IMR-90 (cell line): ENCODE measurements at regions of chr7 and their contacts with region 1.

Region 1: DNA sequence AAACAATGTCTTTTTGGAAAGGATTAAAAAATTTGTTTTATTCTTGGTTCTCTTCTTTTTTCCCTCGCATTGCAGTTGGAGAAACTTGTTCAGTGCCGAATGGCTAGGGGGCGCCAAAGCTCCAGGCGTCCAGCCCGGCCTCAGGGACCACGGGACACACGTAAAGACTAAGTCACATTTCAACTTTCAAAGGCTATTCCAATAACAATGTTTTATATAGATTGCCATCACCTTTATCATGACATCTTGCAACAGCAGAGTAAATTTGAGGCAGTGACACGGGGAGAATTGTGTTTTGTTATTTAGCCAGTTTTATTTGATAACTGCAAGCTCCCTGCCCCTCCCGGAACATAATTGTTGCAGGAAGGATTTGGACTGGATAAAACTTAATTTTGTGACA is 2.2 kb upstream of the IGFBP3 start:
- DNase-seq: peak; percentile 72
- ATAC-seq: no peak
- H3K4me3 ChIP-seq: no peak overlapping the region; the same call in 1 of the 2 replicates
- H3K27ac ChIP-seq: no peak overlapping the region
- H3K4me1 ChIP-seq: peaks cover 14% of the 10 kb centered on the region
- H3K27me3 ChIP-seq: no peaks in the 10 kb centered on the region
- CTCF ChIP-seq: peak; percentile 97
- POLR2A ChIP-seq: peak; percentile 47; the same call in 1 of the 2 replicates
- RAD21 ChIP-seq: peak; percentile 99

Region 2: GRCh38 chr7:45469103-45469502 is 454.2 kb before region 1 on chr7:
- CTCF ChIA-PET with region 1: no interaction called
- POLR2A ChIA-PET with region 1: no interaction called
- dilution Hi-C with region 1: no loop called
- in situ Hi-C with region 1: no loop called
- intact Hi-C with region 1: no loop called
- DNase-seq: no peak
- ATAC-seq: no peak
- H3K4me3 ChIP-seq: no peak overlapping the region
- H3K27ac ChIP-seq: no peak overlapping the region
- H3K4me1 ChIP-seq: no peaks in the 10 kb centered on the region
- H3K27me3 ChIP-seq: no peaks in the 10 kb centered on the region
- CTCF ChIP-seq: no peak
- POLR2A ChIP-seq: no peak
- RAD21 ChIP-seq: no peak

Region 3: DNA sequence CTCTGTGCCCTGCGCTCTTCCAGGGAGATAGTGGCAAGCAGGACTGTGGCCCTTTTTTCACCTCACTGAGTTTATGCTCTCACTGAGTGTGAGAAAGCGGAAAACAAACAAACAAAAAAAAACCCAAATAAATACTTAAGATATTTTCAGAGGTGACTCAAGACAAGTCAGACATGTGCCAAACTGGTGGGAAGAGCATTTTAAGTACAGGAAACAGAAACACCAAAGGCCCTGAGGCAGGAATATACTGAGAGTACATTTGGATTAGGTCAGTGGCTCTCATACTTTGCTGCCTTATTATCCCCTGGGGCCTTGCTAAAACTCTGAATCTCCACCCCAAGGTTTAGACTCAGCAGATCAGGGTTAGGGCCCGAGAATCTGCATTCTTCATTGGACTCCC is 109.7 kb after region 1 on chr7:
- CTCF ChIA-PET with region 1: no interaction called
- POLR2A ChIA-PET with region 1: no interaction called
- dilution Hi-C with region 1: no loop called
- in situ Hi-C with region 1: no loop called
- intact Hi-C with region 1: loop called (anchors 10 kb)
- DNase-seq: peak; percentile 39
- ATAC-seq: no peak
- H3K4me3 ChIP-seq: no peak overlapping the region
- H3K27ac ChIP-seq: no peak overlapping the region
- H3K4me1 ChIP-seq: peaks cover 12% of the 10 kb centered on the region
- H3K27me3 ChIP-seq: no peaks in the 10 kb centered on the region
- CTCF ChIP-seq: no peak
- POLR2A ChIP-seq: no peak
- RAD21 ChIP-seq: no peak

Region 4: GRCh38 chr7:46109437-46109836 is 186.1 kb after region 1 on chr7:
- CTCF ChIA-PET with region 1: no interaction called
- POLR2A ChIA-PET with region 1: no interaction called
- dilution Hi-C with region 1: no loop called
- in situ Hi-C with region 1: no loop called
- intact Hi-C with region 1: no loop called
- DNase-seq: no peak
- ATAC-seq: no peak
- H3K4me3 ChIP-seq: no peak overlapping the region
- H3K27ac ChIP-seq: no peak overlapping the region
- H3K4me1 ChIP-seq: no peaks in the 10 kb centered on the region
- H3K27me3 ChIP-seq: no peaks in the 10 kb centered on the region
- CTCF ChIP-seq: no peak
- POLR2A ChIP-seq: no peak
- RAD21 ChIP-seq: no peak

Region 5: DNA sequence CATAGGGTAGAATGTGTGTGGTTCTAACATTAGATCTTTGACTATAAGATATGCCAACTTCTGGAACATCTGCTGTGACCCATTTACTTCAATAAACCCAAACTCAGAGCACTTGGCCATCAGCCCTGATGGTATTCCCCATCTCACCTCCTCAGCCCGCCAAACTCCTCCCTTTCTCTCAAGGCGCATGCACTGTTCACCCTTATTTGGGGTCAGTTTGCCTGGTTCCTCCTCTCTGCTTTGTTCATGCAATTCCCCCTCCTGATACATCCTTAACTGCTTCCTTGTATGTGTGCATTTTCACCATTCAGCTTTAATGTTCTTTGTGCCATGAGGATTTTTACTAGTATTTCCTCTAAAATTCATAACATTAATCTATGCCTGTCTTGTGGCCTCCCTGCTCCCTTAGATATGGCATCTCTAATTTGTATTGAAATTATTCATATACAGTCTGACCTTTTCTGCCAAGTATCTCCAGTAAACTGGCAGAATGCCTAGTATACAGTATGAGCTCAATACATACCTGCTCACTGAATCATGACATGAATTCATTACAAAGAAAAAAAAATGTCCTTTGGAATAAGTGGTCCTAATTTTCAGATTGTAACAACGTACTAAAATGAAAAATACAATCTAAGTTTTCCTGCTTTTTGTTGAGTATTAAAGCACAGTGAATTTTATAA is 334.6 kb after region 1 on chr7:
- CTCF ChIA-PET with region 1: no interaction called
- POLR2A ChIA-PET with region 1: no interaction called
- dilution Hi-C with region 1: no loop called
- in situ Hi-C with region 1: no loop called
- intact Hi-C with region 1: loop called (anchors 5 kb)
- DNase-seq: peak; percentile 93
- ATAC-seq: peak; percentile 87
- H3K4me3 ChIP-seq: no peak overlapping the region
- H3K27ac ChIP-seq: peak overlapping the region; percentile 60
- H3K4me1 ChIP-seq: peaks cover 10% of the 10 kb centered on the region
- H3K27me3 ChIP-seq: no peaks in the 10 kb centered on the region
- CTCF ChIP-seq: no peak
- POLR2A ChIP-seq: no peak
- RAD21 ChIP-seq: no peak

Region 6: DNA sequence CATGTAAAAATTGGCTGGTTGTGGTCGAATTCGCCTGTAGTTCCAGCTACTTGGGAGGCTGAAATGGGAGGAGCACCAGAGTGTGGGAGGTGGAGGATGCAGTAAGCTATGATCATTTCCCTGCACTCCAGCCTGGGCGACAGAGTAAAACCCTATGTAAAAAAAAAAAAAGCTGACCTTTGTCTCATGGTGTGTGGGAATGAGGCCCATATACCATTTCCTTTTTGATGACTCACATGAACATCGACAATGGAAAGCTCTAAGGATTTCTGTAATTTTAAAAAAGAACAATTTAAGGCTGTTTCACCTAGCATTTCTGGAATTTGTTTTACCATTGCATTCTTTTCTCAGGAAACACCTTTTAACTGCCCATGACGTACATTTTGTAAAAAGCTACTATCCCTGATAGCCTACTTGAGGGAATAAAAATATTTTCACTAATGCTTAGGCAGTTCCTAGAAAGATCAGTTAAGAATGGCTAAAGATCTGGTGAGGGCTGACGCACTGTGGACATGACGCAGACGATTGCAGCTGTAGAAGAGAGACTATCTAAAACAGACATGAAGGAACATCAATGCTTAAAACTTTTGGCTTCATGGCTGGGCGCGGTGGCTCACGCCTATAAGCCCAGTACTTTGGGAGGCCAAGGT is 398.4 kb after region 1 on chr7:
- CTCF ChIA-PET with region 1: no interaction called
- POLR2A ChIA-PET with region 1: no interaction called
- dilution Hi-C with region 1: no loop called
- in situ Hi-C with region 1: no loop called
- intact Hi-C with region 1: no loop called
- DNase-seq: peak; percentile 68
- ATAC-seq: no peak
- H3K4me3 ChIP-seq: no peak overlapping the region
- H3K27ac ChIP-seq: no peak overlapping the region
- H3K4me1 ChIP-seq: peaks cover 2% of the 10 kb centered on the region; the same call in 1 of the 2 replicates
- H3K27me3 ChIP-seq: no peaks in the 10 kb centered on the region
- CTCF ChIP-seq: no peak
- POLR2A ChIP-seq: no peak
- RAD21 ChIP-seq: no peak

Region 7: DNA sequence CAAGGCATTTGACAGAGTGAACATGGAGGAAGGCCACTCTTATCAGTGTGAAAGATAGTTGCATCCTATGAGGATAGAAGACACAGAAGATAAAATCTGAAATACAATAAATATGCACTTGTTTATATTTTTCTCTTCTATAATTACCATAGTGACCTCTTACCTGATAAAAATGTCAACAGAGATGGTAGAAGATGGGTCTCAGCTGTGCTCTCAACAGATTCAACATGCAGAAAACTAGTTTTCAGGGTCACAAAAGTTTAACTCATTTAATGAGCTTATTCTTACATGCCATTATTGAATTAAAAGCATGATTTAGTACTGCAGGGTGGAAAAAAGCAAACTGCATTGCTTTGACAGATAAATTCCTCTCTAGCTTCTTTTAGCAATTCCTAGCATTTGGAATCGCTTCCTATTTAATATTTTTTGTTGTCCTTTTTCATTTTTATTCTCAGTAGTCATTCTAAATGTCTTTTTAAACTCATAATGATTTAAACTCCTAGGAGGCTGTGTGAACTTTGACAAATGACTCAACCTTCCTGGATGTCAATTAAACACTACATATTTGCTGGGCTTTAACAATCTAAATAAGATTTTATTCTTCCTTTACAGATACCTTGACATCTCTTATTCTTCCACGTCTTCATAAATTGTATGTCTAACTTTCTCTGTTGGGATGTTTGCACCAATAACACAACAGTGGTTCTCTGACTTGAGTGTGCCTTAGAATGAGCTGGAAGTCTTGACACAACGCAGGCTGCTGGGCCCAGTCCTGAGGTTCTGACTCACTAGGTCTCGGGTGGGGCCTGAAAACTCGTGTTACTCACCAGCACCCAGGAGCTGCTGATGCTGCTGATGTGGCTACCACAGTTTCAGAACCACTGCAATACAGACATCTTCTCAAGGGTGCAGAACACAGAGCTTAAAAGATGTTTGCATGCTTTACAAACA is 563.2 kb after region 1 on chr7:
- CTCF ChIA-PET with region 1: interaction called, 6 read pairs
- POLR2A ChIA-PET with region 1: no interaction called
- dilution Hi-C with region 1: no loop called
- in situ Hi-C with region 1: no loop called
- intact Hi-C with region 1: loop called (anchors 1 kb)
- DNase-seq: peak; percentile 88
- ATAC-seq: peak; percentile 83
- H3K4me3 ChIP-seq: no peak overlapping the region
- H3K27ac ChIP-seq: peak overlapping the region; percentile 41
- H3K4me1 ChIP-seq: peaks cover 14% of the 10 kb centered on the region
- H3K27me3 ChIP-seq: no peaks in the 10 kb centered on the region
- CTCF ChIP-seq: no peak
- POLR2A ChIP-seq: no peak
- RAD21 ChIP-seq: no peak

Region 8: GRCh38 chr7:46932676-46933424 is 1009.6 kb after region 1 on chr7:
- CTCF ChIA-PET with region 1: interaction called, 5 read pairs
- POLR2A ChIA-PET with region 1: no interaction called
- dilution Hi-C with region 1: no loop called
- in situ Hi-C with region 1: loop called (anchors 25 kb)
- intact Hi-C with region 1: loop called (anchors 2 kb)
- DNase-seq: peak; percentile 96
- ATAC-seq: peak; percentile 75
- H3K4me3 ChIP-seq: no peak overlapping the region
- H3K27ac ChIP-seq: peak overlapping the region; percentile 80; the same call in 1 of the 2 replicates
- H3K4me1 ChIP-seq: peaks cover 14% of the 10 kb centered on the region
- H3K27me3 ChIP-seq: no peaks in the 10 kb centered on the region
- CTCF ChIP-seq: peak; percentile 38
- POLR2A ChIP-seq: no peak
- RAD21 ChIP-seq: peak; percentile 50

Region 9: GRCh38 chr7:47254081-47255006 is 1331.1 kb after region 1 on chr7:
- CTCF ChIA-PET with region 1: no interaction called
- POLR2A ChIA-PET with region 1: no interaction called
- dilution Hi-C with region 1: no loop called
- in situ Hi-C with region 1: no loop called
- intact Hi-C with region 1: loop called (anchors 2 kb)
- DNase-seq: peak; percentile 35
- ATAC-seq: peak; percentile 90
- H3K4me3 ChIP-seq: peak overlapping the region; percentile 76
- H3K27ac ChIP-seq: peak overlapping the region; percentile 66
- H3K4me1 ChIP-seq: peaks cover 6% of the 10 kb centered on the region
- H3K27me3 ChIP-seq: no peaks in the 10 kb centered on the region
- CTCF ChIP-seq: peak; percentile 85
- POLR2A ChIP-seq: no peak
- RAD21 ChIP-seq: peak; percentile 65